A673 (cell line): ENCODE measurements at regions of chr14 and their contacts with region 1.

Region 1: DNA sequence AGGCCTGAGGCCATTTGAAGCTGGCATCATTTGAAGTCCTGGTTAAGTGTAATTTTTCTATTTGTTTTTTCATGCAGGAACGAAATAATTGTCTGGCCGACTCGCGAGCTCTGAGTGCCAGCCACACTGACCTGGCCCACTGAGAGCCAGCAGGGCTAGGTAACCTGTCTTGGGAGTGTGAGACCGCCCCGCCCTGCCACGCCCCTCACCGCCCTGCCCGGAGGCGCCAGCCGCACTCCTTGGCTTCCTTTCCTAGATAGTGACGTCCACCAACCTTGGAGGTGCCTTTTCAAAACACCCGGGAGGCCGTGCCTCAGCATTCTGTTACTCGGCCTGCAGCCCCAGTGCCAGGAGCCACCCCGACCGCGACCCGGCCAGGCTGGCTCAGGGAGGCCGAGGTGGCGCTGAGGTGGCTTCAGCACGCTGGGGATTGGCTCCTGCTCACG is 21.8 kb downstream of the XRCC3 start:
- DNase-seq: no peak
- H3K4me3 ChIP-seq: no peak overlapping the region
- H3K27ac ChIP-seq: no peak overlapping the region
- H3K4me1 ChIP-seq: peaks cover 26% of the 10 kb centered on the region
- H3K27me3 ChIP-seq: no peaks in the 10 kb centered on the region
- CTCF ChIP-seq: no peak

Region 2: DNA sequence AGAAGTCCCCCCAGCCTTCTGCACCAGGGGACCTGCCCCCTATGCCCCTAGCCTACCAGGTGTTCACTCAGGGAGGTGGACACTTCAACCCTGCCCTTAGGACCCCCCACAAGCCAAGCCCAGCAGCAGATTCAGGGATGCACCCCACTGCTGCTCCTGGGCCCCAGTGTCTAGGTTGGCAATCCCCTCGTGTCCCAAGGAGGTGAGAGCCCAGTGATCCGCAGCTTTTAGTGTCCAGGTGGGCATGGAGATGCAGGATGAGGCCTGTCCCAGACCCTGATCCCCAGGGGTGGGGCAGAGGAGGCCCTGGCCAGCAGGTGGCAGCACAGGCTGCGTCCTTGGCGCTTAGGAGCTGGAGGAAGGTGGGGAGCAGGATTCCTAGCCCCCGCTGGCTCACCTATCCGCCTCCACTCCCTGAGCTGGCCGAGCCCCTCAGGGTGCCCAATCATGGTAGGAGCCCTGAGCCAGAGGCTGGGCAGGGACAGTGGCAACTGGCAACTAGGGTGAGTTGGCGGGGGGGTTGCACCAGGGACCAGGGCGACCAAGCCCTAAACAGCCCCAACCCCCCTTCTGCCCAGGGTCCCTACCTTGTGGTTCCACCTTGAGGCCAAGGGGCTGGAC is 175.0 kb before region 1 on chr14:
- CTCF ChIA-PET with region 1: no interaction called
- POLR2A ChIA-PET with region 1: no interaction called
- intact Hi-C with region 1: no loop called
- DNase-seq: peak; percentile 67
- H3K4me3 ChIP-seq: no peak overlapping the region
- H3K27ac ChIP-seq: peak overlapping the region; percentile 42
- H3K4me1 ChIP-seq: peaks cover 18% of the 10 kb centered on the region
- H3K27me3 ChIP-seq: no peaks in the 10 kb centered on the region
- CTCF ChIP-seq: peak; percentile 95

Region 3: DNA sequence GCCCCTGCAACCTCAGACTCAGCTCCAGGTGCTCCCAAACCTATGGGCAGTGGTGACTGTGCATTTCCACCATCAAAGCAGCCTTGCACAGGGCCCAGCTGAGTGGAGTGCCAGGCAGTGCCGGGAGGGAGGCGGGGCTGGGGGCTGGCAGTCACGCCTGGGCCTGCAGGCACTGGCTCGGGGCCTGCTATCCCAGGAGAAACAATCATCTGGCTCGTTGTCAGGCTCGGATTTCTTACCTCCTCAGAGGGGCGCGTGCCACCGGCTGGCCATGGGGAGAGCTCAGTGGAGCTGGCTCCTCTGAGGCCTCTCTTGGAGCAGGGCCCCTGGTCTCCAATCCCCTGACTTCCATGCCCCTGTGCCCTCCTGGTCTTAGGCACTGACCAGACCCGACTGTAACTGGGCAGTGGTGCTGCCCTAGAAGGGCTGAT is 174.0 kb after region 1 on chr14:
- CTCF ChIA-PET with region 1: no interaction called
- POLR2A ChIA-PET with region 1: interaction called, 14 read pairs
- intact Hi-C with region 1: no loop called
- DNase-seq: peak; percentile 45
- H3K4me3 ChIP-seq: no peak overlapping the region
- H3K27ac ChIP-seq: no peak overlapping the region
- H3K4me1 ChIP-seq: peaks cover 13% of the 10 kb centered on the region
- H3K27me3 ChIP-seq: no peaks in the 10 kb centered on the region
- CTCF ChIP-seq: no peak

Region 4: GRCh38 chr14:104108216-104108569 is 414.7 kb after region 1 on chr14:
- CTCF ChIA-PET with region 1: no interaction called
- POLR2A ChIA-PET with region 1: no interaction called
- intact Hi-C with region 1: no loop called
- DNase-seq: peak; percentile 54
- H3K4me3 ChIP-seq: no peak overlapping the region
- H3K27ac ChIP-seq: no peak overlapping the region
- H3K4me1 ChIP-seq: no peaks in the 10 kb centered on the region
- H3K27me3 ChIP-seq: peaks cover 3% of the 10 kb centered on the region
- CTCF ChIP-seq: 0 out of 2 replicates have a peak, but pooled peaks have one; percentile 20